ENCODE measurements at regions of chr2 and their contacts with region 1.

Region 1: DNA sequence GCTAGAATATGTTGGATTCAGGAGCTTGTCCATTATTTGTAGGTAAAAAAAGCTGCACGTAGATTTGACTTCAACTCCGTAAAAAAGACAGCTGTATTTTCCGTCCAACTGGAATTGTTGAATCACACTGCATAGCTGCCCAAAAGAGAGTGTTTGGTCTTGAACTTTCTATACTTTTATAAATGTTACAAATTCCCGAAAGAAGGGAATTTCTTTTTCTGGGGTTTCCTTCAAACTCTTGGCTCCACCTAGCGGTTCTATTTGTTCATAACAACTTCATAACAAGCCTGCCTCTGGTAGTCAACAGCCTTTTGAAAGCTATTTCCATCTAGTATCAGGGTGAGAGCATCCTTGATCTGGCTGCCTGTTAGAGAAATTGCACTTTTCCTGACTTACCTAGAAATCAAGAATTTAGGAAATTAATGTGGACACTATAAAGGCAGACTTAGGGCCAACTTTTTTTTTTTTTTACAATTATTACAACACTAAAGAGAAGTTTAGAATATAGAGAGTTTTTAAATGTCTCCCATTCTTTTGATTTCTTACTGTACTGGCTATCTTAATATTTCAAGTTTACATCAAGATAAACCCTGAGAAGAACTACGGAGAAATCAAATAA is 48.1 kb downstream of the TMEM185B start:
- DNase-seq: peak; percentile 28
- ATAC-seq: peak; percentile 69; the same call in 1 of the 2 replicates
- H3K4me3 ChIP-seq: no peak overlapping the region
- H3K27ac ChIP-seq: no peak overlapping the region
- H3K4me1 ChIP-seq: no peaks in the 10 kb centered on the region
- H3K27me3 ChIP-seq: no peaks in the 10 kb centered on the region
- CTCF ChIP-seq: peak; percentile 63 to 78 (median 72); a peak in 5 of 6 replicates
- POLR2A ChIP-seq: no peak
- RAD21 ChIP-seq: peak; percentile 81

Region 2: DNA sequence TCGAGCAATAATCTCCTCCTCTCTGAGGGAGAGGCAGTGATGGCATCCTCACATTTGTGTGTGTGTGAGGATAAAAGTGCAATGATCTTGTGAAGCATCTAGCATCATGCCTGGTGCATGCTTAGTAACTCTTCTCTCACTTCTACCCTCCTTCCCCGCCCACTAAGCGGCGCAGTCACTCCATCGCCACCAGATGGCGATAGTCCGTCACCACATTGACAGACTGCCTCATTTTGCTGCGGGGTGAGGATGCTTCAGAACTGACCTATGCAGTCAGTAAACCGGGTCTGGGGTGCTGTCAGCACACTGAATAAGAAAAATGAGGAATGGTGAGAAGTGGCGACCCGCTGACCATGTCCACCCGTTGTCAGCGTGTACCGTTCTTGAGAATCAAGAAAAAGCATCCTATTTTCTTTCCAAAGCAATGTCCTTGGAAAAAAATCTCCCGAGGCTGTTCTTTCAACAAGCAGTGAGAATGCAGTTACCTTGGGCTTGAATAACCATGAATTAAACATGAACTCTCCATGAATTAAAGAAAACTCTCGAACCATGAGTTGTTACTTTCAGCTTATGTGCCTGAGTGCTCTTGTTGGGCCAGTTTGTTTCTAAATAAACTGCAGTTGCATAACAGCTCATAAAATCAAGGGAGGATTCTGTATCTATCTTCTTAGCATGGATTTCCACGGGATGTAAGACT is 533.4 kb before region 1 on chr2:
- CTCF ChIA-PET with region 1: interaction called, 18 read pairs
- POLR2A ChIA-PET with region 1: no interaction called
- RAD21 ChIA-PET with region 1: no interaction called
- intact Hi-C with region 1: loop called (anchors 2 kb)
- DNase-seq: peak; percentile 63
- ATAC-seq: peak; percentile 99
- H3K4me3 ChIP-seq: no peak overlapping the region
- H3K27ac ChIP-seq: no peak overlapping the region
- H3K4me1 ChIP-seq: no peaks in the 10 kb centered on the region
- H3K27me3 ChIP-seq: no peaks in the 10 kb centered on the region
- CTCF ChIP-seq: peak; percentile 91 to 99 (median 97)
- POLR2A ChIP-seq: no peak
- RAD21 ChIP-seq: peak; percentile 84

Region 3: GRCh38 chr2:119702918-119703401 is 472.1 kb before region 1 on chr2:
- CTCF ChIA-PET with region 1: interaction called, 26 read pairs
- POLR2A ChIA-PET with region 1: no interaction called
- RAD21 ChIA-PET with region 1: interaction called, 3 read pairs
- intact Hi-C with region 1: loop called (anchors 1 kb)
- DNase-seq: peak; percentile 58
- ATAC-seq: peak; percentile 99
- H3K4me3 ChIP-seq: no peak overlapping the region
- H3K27ac ChIP-seq: no peak overlapping the region
- H3K4me1 ChIP-seq: peaks cover 0 to 5% of the 10 kb centered on the region in 2 experiments; a peak in 1 of 4 replicates
- H3K27me3 ChIP-seq: no peaks in the 10 kb centered on the region
- CTCF ChIP-seq: peak; percentile 93 to 98 (median 97)
- POLR2A ChIP-seq: no peak
- RAD21 ChIP-seq: peak; percentile 92

Region 4: GRCh38 chr2:119753041-119753929 is 421.8 kb before region 1 on chr2:
- CTCF ChIA-PET with region 1: interaction called, 6 read pairs
- POLR2A ChIA-PET with region 1: no interaction called
- RAD21 ChIA-PET with region 1: no interaction called
- intact Hi-C with region 1: loop called (anchors 5 kb)
- DNase-seq: peak; percentile 41
- ATAC-seq: peak; percentile 86
- H3K4me3 ChIP-seq: no peak overlapping the region
- H3K27ac ChIP-seq: no peak overlapping the region
- H3K4me1 ChIP-seq: peaks cover 8 to 37% of the 10 kb centered on the region in 2 experiments; a peak in 3 of 4 replicates
- H3K27me3 ChIP-seq: no peaks in the 10 kb centered on the region
- CTCF ChIP-seq: peak; percentile 68 to 73 (median 71)
- POLR2A ChIP-seq: no peak
- RAD21 ChIP-seq: peak; percentile 84

Region 5: GRCh38 chr2:120109186-120110061 is 65.6 kb before region 1 on chr2:
- CTCF ChIA-PET with region 1: interaction called, 17 read pairs
- POLR2A ChIA-PET with region 1: no interaction called
- RAD21 ChIA-PET with region 1: interaction called in 1 of 2 experiments, 4 read pairs
- intact Hi-C with region 1: loop called (anchors 2 kb)
- DNase-seq: peak; percentile 12
- ATAC-seq: peak; percentile 80
- H3K4me3 ChIP-seq: no peak overlapping the region
- H3K27ac ChIP-seq: no peak overlapping the region
- H3K4me1 ChIP-seq: peaks cover 0 to 6% of the 10 kb centered on the region in 2 experiments; a peak in 1 of 4 replicates
- H3K27me3 ChIP-seq: no peaks in the 10 kb centered on the region
- CTCF ChIP-seq: peak; percentile 31 to 75 (median 62)
- POLR2A ChIP-seq: no peak
- RAD21 ChIP-seq: peak; percentile 68

Measured in HCT116 (cell line).